ENCODE measurements at regions of chr1 and their contacts with region 1.

Region 1: DNA sequence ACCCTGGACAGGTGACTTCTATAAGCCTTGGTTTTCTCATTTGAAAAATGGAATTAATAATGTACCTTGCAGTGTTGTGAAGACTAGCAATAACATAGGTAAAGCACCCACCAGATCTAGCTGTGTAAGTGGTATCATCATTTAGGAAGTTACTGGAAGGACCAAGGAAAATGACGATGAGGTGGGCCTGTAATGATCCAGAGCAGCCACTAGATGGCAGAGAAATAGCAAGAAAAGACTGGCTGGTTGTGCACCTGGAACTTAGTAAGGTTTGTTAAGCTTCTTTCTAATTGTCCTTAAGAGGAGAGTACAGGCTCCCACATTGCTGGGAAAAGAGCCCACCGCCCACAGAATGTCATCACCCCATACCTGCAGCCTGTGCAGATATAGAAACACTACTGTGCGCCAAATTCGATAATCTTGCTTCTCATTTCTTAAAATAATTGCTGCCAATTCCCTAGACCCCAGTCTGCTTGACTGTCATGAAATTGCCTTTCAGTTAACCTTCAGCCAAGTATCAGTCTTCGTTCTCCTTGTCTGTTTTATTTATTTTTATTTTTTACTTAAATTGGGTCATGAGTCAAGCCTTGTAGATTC is 37.2 kb downstream of the WNT4 start:
- DNase-seq: no peak
- ATAC-seq: peak; percentile 59 to 79 (median 74)
- H3K4me3 ChIP-seq: no peak overlapping the region
- H3K27ac ChIP-seq: no peak overlapping the region
- H3K4me1 ChIP-seq: peaks cover 10% of the 10 kb centered on the region
- H3K27me3 ChIP-seq: no peaks in the 10 kb centered on the region
- CTCF ChIP-seq: peak; percentile 84

Region 2: GRCh38 chr1:21882669-21883415 is 222.9 kb before region 1 on chr1:
- intact Hi-C with region 1: no loop called
- DNase-seq: peak in 1 of 2 donors; percentile 56
- ATAC-seq: peak in 3 of 4 donors; percentile 9 to 29 (median 13)
- H3K4me3 ChIP-seq: no peak overlapping the region
- H3K27ac ChIP-seq: no peak overlapping the region
- H3K4me1 ChIP-seq: no peaks in the 10 kb centered on the region
- H3K27me3 ChIP-seq: no peaks in the 10 kb centered on the region
- CTCF ChIP-seq: no peak

Region 3: GRCh38 chr1:21919520-21919919 is 186.2 kb before region 1 on chr1:
- intact Hi-C with region 1: no loop called
- DNase-seq: no peak
- ATAC-seq: peak; percentile 20 to 41 (median 28)
- H3K4me3 ChIP-seq: no peak overlapping the region
- H3K27ac ChIP-seq: peak overlapping the region; percentile 52
- H3K4me1 ChIP-seq: peaks cover 52% of the 10 kb centered on the region
- H3K27me3 ChIP-seq: peaks cover 0 to 2% (median 0%) of the 10 kb centered on the region in 3 donors
- CTCF ChIP-seq: no peak

Region 4: GRCh38 chr1:22208235-22208972 is 102.7 kb after region 1 on chr1:
- intact Hi-C with region 1: loop called in 1 of 2 experiments (anchors 5 kb)
- DNase-seq: peak in 1 of 2 donors; percentile 53
- ATAC-seq: peak; percentile 40 to 69 (median 60)
- H3K4me3 ChIP-seq: no peak overlapping the region
- H3K27ac ChIP-seq: no peak overlapping the region
- H3K4me1 ChIP-seq: no peaks in the 10 kb centered on the region
- H3K27me3 ChIP-seq: peaks cover 0 to 57% (median 18%) of the 10 kb centered on the region in 3 donors
- CTCF ChIP-seq: peak; percentile 48

Region 5: GRCh38 chr1:22275721-22276395 is 170.1 kb after region 1 on chr1:
- intact Hi-C with region 1: loop called (anchors 1 to 2 kb)
- DNase-seq: peak; percentile 40 to 65
- ATAC-seq: peak; percentile 79 to 88 (median 80)
- H3K4me3 ChIP-seq: no peak overlapping the region
- H3K27ac ChIP-seq: no peak overlapping the region
- H3K4me1 ChIP-seq: no peaks in the 10 kb centered on the region
- H3K27me3 ChIP-seq: peaks cover 0 to 4% (median 0%) of the 10 kb centered on the region in 3 donors
- CTCF ChIP-seq: peak; percentile 79

Region 6: GRCh38 chr1:22416555-22417454 is 311.1 kb after region 1 on chr1:
- intact Hi-C with region 1: loop called (anchors 5 to 10 kb)
- DNase-seq: peak; percentile 55 to 85
- ATAC-seq: peak; percentile 61 to 75 (median 64)
- H3K4me3 ChIP-seq: no peak overlapping the region
- H3K27ac ChIP-seq: no peak overlapping the region
- H3K4me1 ChIP-seq: peaks cover 26% of the 10 kb centered on the region
- H3K27me3 ChIP-seq: no peaks in the 10 kb centered on the region
- CTCF ChIP-seq: peak; percentile 82

Region 7: DNA sequence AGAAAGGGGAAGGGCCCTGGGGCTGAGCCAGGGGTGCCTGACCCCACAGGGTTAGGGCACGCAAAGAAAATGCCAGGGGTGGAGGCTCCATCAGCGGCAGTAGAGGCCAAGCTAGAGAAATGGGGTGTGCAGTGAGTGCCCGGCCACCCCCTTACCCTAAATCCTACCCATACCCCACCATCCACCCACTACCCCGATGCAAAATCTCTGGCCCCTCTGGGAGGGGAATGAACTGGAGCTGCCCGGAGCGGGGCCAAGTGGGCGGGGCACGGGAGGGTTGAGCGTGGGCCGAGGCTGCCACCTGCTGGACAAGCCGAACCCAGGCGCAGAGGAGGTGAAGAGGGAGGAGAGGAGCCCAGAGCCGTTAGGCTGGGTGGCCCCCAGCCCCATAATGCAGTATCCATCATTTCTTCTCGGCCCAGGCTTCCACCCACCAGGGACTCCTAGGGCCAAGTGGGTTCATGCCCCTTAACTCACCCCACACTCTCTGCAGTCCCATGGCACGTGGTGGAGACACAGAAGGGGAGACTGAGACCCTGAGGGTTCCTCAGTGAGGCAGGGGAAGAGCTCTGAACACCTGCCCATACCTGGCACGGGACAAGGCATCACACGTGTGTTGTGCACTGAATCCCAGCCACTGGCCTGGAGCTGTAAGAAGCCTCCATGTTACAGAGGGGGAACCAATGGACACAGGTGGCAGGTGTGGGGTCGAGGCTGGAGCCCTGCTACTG is 536.4 kb after region 1 on chr1:
- intact Hi-C with region 1: loop called in 1 of 2 experiments (anchors 5 kb)
- DNase-seq: peak; percentile 87 to 92
- ATAC-seq: peak; percentile 91 to 96 (median 94)
- H3K4me3 ChIP-seq: no peak overlapping the region
- H3K27ac ChIP-seq: no peak overlapping the region
- H3K4me1 ChIP-seq: no peaks in the 10 kb centered on the region
- H3K27me3 ChIP-seq: peaks cover 0 to 7% (median 0%) of the 10 kb centered on the region in 3 donors
- CTCF ChIP-seq: peak; percentile 93